Posterior vena cava (tissue), 2 donors: ENCODE measurements at regions of chrX and their contacts with region 1.

Region 1: DNA sequence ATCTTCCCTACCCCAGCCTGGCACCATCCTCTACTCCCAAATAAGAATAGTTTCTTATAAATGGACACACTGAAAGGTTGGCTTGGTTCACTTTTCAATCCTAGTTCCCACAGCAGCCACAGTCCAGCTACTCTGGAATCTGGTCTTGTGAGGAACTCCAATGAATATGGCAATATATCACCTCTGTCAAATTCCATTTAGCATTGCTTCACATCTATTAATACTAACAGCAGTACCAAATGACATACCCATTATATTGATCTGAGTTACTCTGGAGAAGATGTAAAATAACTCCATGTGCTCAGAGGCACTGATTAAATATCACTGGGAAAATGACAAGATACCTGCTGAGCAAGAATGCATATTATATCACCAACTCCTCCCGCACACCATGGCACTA is 8.6 kb downstream of the OPHN1 start:
- DNase-seq: no peak

Region 2: DNA sequence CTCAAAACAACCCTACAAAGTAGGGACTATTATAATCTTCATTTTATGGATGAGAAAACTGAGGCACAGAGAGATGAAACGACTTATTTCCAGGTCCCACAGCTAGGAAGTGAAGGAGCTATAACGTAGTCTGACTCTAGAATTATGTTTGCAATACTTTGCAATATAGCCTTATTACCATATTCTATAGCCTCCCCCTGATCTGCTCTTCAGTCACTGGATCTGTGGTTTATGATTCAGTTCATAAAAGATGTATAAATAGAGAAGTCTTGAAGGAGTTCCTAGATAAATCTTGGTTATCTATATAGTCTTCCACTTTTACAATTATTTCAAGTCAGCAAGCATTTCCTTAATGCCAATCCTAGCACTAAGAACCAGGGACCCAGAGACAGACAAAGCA is 48.9 kb before region 1 on chrX:
- intact Hi-C with region 1: loop called in 1 of 2 experiments (anchors 2 kb)
- DNase-seq: no peak

Region 3: DNA sequence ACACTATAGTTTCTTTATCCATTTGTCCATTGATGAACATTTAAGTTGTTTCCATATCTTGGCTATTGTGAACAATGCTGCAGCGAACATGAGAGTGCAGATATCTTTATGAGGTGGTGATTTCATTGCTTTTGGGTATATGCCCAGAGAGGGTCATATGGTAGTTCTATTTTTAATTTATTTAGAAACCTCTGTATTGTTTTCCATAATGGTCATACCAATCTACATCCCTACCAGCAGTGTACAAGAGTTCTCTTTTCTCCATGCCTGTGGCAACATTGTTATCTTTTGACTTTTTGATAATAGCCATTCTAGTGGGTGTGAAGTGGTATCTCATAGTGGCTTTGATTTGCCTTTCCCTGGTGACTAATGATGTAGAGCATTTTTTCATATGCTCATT is 1240.0 kb after region 1 on chrX:
- intact Hi-C with region 1: no loop called
- DNase-seq: no peak